ENCODE measurements at regions of chr14 and their contacts with region 1.

Region 1: GRCh38 chr14:31207755-31208545 is at the start of gene HECTD1:
- DNase-seq: peak; percentile 70 to 88
- H3K4me3 ChIP-seq: peak within 1 kb of the TSS; percentile 73 to 99 (median 80)
- H3K27ac ChIP-seq: peak within 1 kb of the TSS; percentile 93
- H3K4me1 ChIP-seq: peaks cover 0 to 1% (median 0%) of the 10 kb centered on the region in 4 experiments; a peak in 1 of 7 replicates
- H3K27me3 ChIP-seq: no peaks in the 10 kb centered on the region
- CTCF ChIP-seq: peak; percentile 67 to 88 (median 68)
- EP300 ChIP-seq: peak; percentile 14 to 44; a peak in 2 of 3 replicates
- POLR2A ChIP-seq: peak in 1 of 2 experiments; percentile 59; a peak in 1 of 3 replicates
- RAD21 ChIP-seq: peak; percentile 28 to 57
- total RNA-seq, gene HECTD1: 105 and 110 TPM in 2 replicates

Region 2: DNA sequence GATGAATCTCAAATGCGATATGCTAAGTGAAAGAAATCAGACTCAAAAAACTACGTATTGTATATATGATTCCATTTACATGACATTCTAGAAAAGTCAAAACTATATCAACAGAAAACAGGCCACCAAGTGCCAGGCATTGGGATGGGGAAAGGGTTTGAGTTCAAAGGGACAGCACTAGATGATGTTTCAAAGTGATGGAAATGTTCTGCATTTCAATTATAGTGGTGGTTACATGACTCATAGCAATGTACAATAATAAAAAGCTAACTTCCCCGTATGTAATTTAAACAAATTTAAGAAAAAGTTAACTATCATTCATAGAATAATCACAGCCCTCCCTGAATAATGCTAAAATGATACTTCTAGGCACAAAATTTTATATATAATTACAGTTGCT is 13.9 kb before region 1 on chr14:
- CTCF ChIA-PET with region 1: interaction called, 5 read pairs
- POLR2A ChIA-PET with region 1: interaction called, 23 read pairs
- DNase-seq: no peak
- H3K4me3 ChIP-seq: no peak overlapping the region
- H3K27ac ChIP-seq: no peak overlapping the region
- H3K4me1 ChIP-seq: peaks cover 0 to 4% (median 0%) of the 10 kb centered on the region in 4 experiments; a peak in 2 of 7 replicates
- H3K27me3 ChIP-seq: no peaks in the 10 kb centered on the region
- CTCF ChIP-seq: no peak
- EP300 ChIP-seq: no peak
- POLR2A ChIP-seq: no peak
- RAD21 ChIP-seq: no peak

Region 3: DNA sequence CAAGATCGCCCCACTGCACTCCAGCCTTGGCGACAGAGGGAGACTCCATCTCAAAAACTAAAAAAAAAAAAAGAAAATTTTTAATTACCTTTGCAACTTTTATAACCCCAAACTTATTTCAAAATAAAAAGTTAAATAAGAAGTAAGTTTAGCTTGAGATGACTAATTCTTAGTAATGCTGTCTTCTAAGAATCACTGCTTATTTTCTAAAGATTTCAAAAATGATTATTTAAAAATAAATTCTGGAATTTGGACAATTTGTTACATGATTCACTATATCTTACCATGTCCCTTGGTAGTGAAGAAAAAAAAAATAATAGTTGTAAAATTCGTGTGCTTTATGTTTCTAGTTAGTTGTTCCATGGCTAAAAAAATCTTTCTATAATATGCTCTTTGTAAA is 11.2 kb after region 1 on chr14:
- CTCF ChIA-PET with region 1: interaction called, 15 read pairs
- POLR2A ChIA-PET with region 1: interaction called, 6 read pairs
- DNase-seq: no peak
- H3K4me3 ChIP-seq: no peak overlapping the region
- H3K27ac ChIP-seq: no peak overlapping the region
- H3K4me1 ChIP-seq: no peaks in the 10 kb centered on the region
- H3K27me3 ChIP-seq: no peaks in the 10 kb centered on the region
- CTCF ChIP-seq: no peak
- EP300 ChIP-seq: no peak
- POLR2A ChIP-seq: no peak
- RAD21 ChIP-seq: no peak

Region 4: GRCh38 chr14:31229638-31230229 is 21.8 kb after region 1 on chr14:
- CTCF ChIA-PET with region 1: interaction called, 10 read pairs
- POLR2A ChIA-PET with region 1: interaction called, 3 read pairs
- DNase-seq: peak in 1 of 2 experiments; percentile 51
- H3K4me3 ChIP-seq: peak overlapping the region in 2 of 4 experiments; percentile 4 to 27; a peak in 2 of 8 replicates
- H3K27ac ChIP-seq: no peak overlapping the region
- H3K4me1 ChIP-seq: peaks cover 0 to 6% (median 2%) of the 10 kb centered on the region in 4 experiments; a peak in 2 of 7 replicates
- H3K27me3 ChIP-seq: no peaks in the 10 kb centered on the region
- CTCF ChIP-seq: no peak
- EP300 ChIP-seq: no peak
- POLR2A ChIP-seq: no peak
- RAD21 ChIP-seq: no peak

Region 5: GRCh38 chr14:31297701-31298344 is 89.9 kb after region 1 on chr14:
- CTCF ChIA-PET with region 1: interaction called, 5 read pairs
- POLR2A ChIA-PET with region 1: interaction called, 13 read pairs
- DNase-seq: no peak
- H3K4me3 ChIP-seq: no peak overlapping the region
- H3K27ac ChIP-seq: no peak overlapping the region
- H3K4me1 ChIP-seq: peaks cover 0 to 11% (median 2%) of the 10 kb centered on the region in 4 experiments; a peak in 2 of 7 replicates
- H3K27me3 ChIP-seq: no peaks in the 10 kb centered on the region
- CTCF ChIP-seq: no peak
- EP300 ChIP-seq: no peak
- POLR2A ChIP-seq: no peak
- RAD21 ChIP-seq: no peak

Measured in H1 (cell line).